Cardiac septum (tissue), 1 donor: ENCODE measurements at regions of chr2 and their contacts with region 1.

Region 1: DNA sequence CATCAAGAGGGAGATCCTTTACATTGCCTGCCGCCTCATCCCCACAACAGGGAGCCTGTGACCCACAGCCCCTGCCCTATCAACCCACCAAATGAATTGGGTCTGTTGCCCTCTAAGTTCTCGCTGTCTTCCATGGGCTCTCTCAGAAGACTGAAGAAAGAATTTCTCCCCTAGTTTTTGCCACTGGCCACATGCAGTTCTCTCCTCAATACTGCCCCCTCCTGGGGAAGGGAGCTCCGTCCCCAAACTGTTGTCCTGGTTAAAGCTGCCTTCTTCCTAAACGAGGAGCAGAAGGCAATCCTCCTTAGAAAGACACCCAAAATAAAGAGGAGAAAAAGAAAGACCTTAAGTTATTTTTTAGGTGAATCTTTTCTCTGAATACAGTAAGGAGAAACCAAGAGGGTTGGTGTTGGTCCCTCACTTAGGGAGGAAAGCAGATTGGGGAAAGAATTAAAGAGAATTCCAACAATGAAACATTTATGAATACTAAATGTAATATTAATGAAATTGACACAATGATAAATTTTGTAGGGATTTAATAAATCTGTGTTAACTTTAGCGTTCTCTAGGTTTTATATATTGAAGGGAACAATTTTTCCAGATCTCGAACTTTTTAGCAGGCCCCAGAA is 31.1 kb upstream of the SATB2 start:
- DNase-seq: no peak

Region 2: GRCh38 chr2:198657512-198658121 is 831.3 kb before region 1 on chr2:
- intact Hi-C with region 1: loop called (anchors 10 kb)
- DNase-seq: no peak

Region 3: DNA sequence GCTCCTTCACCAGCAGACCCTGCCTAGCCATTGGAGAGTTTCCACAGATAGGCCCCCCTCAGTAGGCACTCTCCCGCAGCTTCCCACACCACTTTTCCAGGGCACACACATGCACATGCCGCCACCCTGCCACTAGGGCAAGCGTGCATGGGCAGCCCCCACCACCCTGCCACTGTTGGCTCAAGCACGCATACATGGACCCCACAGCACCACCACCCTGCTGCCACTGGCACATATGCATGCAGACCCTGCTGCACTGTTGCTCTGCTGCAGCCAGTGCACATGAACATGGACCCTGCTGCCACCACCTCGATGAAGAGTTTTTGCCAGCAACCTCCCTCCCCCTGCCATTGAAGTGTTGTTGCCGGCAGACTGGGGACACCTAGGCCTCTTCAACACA is 207.2 kb after region 1 on chr2:
- intact Hi-C with region 1: no loop called
- DNase-seq: no peak

Region 4: GRCh38 chr2:199734011-199734410 is 245.1 kb after region 1 on chr2:
- intact Hi-C with region 1: no loop called
- DNase-seq: no peak